CD4-positive, alpha-beta memory T cell (primary cell): ENCODE measurements at regions of chr9 and their contacts with region 1.

Region 1: GRCh38 chr9:128127990-128128835 is 684 bp upstream of the PTGES2 start:
- DNase-seq: peak; percentile 90 to 94 (median 93)
- H3K4me3 ChIP-seq: peak overlapping the region; percentile 86 to 95
- H3K4me3 Mint-ChIP-seq: peak overlapping the region; percentile 96 to 100 (median 99)
- H3K27ac ChIP-seq: peak overlapping the region; percentile 81
- H3K27ac Mint-ChIP-seq: peak overlapping the region; percentile 98 to 100 (median 99)
- H3K4me1 ChIP-seq: peaks cover 37% of the 10 kb centered on the region
- H3K4me1 Mint-ChIP-seq: peaks cover 24 to 46% (median 33%) of the 10 kb centered on the region in 4 donors
- H3K27me3 ChIP-seq: no peaks in the 10 kb centered on the region
- H3K27me3 Mint-ChIP-seq: peaks cover 0 to 2% of the 10 kb centered on the region in 2 donors

Region 2: GRCh38 chr9:128034821-128035764 is 93.1 kb before region 1 on chr9:
- CTCF ChIA-PET with region 1: no interaction called
- POLR2A ChIA-PET with region 1: no interaction called
- intact Hi-C with region 1: no loop called
- DNase-seq: peak; percentile 78 to 82 (median 80)
- H3K4me3 ChIP-seq: no peak overlapping the region
- H3K4me3 Mint-ChIP-seq: peak overlapping the region; percentile 11 to 84 (median 64)
- H3K27ac ChIP-seq: peak overlapping the region; percentile 15
- H3K27ac Mint-ChIP-seq: peak overlapping the region; percentile 87 to 95 (median 92)
- H3K4me1 ChIP-seq: peaks cover 51% of the 10 kb centered on the region
- H3K4me1 Mint-ChIP-seq: peaks cover 19 to 46% (median 32%) of the 10 kb centered on the region in 4 donors
- H3K27me3 ChIP-seq: no peaks in the 10 kb centered on the region
- H3K27me3 Mint-ChIP-seq: no peaks in the 10 kb centered on the region

Region 3: GRCh38 chr9:128117613-128118471 is 10.4 kb before region 1 on chr9:
- CTCF ChIA-PET with region 1: interaction called, 15 read pairs
- POLR2A ChIA-PET with region 1: interaction called, 10 read pairs
- intact Hi-C with region 1: loop called (anchors 1 kb)
- DNase-seq: peak; percentile 88 to 93 (median 91)
- H3K4me3 ChIP-seq: no peak overlapping the region
- H3K4me3 Mint-ChIP-seq: peak overlapping the region in 2 of 8 donors; percentile 48 to 50
- H3K27ac ChIP-seq: no peak overlapping the region
- H3K27ac Mint-ChIP-seq: peak overlapping the region in 6 of 7 donors; percentile 9 to 91 (median 61)
- H3K4me1 ChIP-seq: peaks cover 6% of the 10 kb centered on the region
- H3K4me1 Mint-ChIP-seq: peaks cover 3 to 7% (median 5%) of the 10 kb centered on the region in 4 donors
- H3K27me3 ChIP-seq: no peaks in the 10 kb centered on the region
- H3K27me3 Mint-ChIP-seq: no peaks in the 10 kb centered on the region

Region 4: DNA sequence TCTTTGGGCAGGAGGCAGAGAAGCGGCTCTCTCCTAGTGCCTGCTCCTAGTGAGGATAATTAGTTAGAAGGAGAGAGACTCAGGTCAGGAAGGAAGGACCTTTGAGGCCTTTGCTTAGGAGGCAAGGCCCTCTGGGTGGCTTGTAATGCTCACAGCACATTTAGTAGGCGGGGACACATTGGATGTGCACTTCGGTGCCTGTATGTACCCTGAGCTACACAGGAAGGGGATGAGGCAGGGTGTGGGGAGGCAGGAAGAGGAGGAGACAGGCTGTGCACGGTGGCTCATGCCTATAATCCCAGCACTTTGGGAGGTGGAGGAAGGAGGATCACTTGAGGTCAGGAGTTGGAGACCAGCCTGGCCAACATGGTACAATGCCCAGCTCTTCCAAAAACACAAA is 13.8 kb after region 1 on chr9:
- CTCF ChIA-PET with region 1: interaction called, 6 read pairs
- POLR2A ChIA-PET with region 1: interaction called, 11 read pairs
- intact Hi-C with region 1: no loop called
- DNase-seq: peak in 2 of 5 donors; percentile 26 to 29
- H3K4me3 ChIP-seq: no peak overlapping the region
- H3K4me3 Mint-ChIP-seq: peak overlapping the region in 6 of 8 donors; percentile 18 to 77 (median 36)
- H3K27ac ChIP-seq: no peak overlapping the region
- H3K27ac Mint-ChIP-seq: peak overlapping the region in 4 of 7 donors; percentile 43 to 79 (median 70)
- H3K4me1 ChIP-seq: peaks cover 19% of the 10 kb centered on the region
- H3K4me1 Mint-ChIP-seq: peaks cover 5 to 19% (median 12%) of the 10 kb centered on the region in 4 donors
- H3K27me3 ChIP-seq: no peaks in the 10 kb centered on the region
- H3K27me3 Mint-ChIP-seq: peaks cover 0 to 1% of the 10 kb centered on the region in 2 donors

Region 5: DNA sequence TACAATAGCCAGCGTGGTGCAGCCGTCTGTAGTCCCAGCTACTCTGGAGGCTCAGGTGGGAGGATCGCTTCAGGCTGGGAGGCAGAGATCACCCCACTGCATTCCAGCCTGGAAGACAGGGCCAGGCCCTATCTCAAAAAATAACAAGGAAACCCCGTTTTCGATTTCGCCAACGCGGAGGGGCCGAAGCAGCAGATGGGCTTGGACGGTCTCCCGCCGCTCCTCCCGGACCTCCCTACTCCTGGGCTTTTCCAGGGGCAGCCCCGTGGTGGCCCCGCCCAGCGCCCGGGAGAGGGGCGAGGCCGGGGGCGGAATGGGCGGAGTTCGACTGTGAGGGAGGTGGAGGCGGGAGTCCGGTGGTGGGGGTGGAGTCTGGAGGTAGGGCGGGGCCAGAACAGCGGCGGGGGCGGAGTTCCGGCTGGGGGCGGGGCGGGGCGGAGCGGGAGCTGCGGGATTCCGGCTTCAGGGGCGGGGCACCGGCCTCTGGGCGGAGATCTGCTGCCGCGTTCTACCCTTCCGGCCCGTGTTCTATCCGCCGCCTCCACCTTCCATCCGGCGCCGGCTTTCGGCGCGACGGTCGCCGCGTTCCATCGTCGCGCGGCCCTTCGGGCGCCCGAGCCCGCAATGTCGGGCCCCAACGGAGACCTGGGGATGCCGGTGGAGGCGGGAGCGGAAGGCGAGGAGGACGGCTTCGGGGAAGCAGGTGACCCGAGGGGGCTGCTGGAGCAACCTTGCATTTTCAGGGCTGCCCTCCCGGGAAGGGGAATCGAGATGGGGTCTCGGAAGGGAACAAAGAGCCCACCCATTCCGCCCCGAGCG is 31.8 kb after region 1 on chr9 and contains the start of gene BBLN:
- CTCF ChIA-PET with region 1: interaction called, 9 read pairs
- POLR2A ChIA-PET with region 1: interaction called, 21 read pairs
- intact Hi-C with region 1: loop called (anchors 1 kb)
- DNase-seq: peak; percentile 87 to 91 (median 90)
- H3K4me3 ChIP-seq: peak within 1 kb of the TSS; percentile 89 to 90
- H3K4me3 Mint-ChIP-seq: peak within 1 kb of the TSS; percentile 81 to 90 (median 82)
- H3K27ac ChIP-seq: peak within 1 kb of the TSS; percentile 89
- H3K27ac Mint-ChIP-seq: peak within 1 kb of the TSS; percentile 89 to 97 (median 93)
- H3K4me1 ChIP-seq: peaks cover 16% of the 10 kb centered on the region
- H3K4me1 Mint-ChIP-seq: peaks cover 9 to 27% (median 20%) of the 10 kb centered on the region in 4 donors
- H3K27me3 ChIP-seq: no peaks in the 10 kb centered on the region
- H3K27me3 Mint-ChIP-seq: no peaks in the 10 kb centered on the region
- total RNA-seq, gene BBLN: 47.8 to 50.5 TPM

Region 6: GRCh38 chr9:128191406-128192046 is 63.3 kb after region 1 on chr9 and contains the start of gene CIZ1:
- CTCF ChIA-PET with region 1: interaction called, 4 read pairs
- POLR2A ChIA-PET with region 1: no interaction called
- intact Hi-C with region 1: loop called (anchors 1 kb)
- DNase-seq: peak; percentile 61 to 77 (median 70)
- H3K4me3 ChIP-seq: peak within 1 kb of the TSS; percentile 81 to 82
- H3K4me3 Mint-ChIP-seq: peak within 1 kb of the TSS; percentile 88 to 98 (median 94)
- H3K27ac ChIP-seq: peak within 1 kb of the TSS; percentile 80
- H3K27ac Mint-ChIP-seq: peak within 1 kb of the TSS; percentile 76 to 97 (median 90)
- H3K4me1 ChIP-seq: peaks cover 22% of the 10 kb centered on the region
- H3K4me1 Mint-ChIP-seq: peaks cover 14 to 35% (median 27%) of the 10 kb centered on the region in 4 donors
- H3K27me3 ChIP-seq: no peaks in the 10 kb centered on the region
- H3K27me3 Mint-ChIP-seq: no peaks in the 10 kb centered on the region
- total RNA-seq, gene CIZ1: 156 to 165 TPM

Region 7: DNA sequence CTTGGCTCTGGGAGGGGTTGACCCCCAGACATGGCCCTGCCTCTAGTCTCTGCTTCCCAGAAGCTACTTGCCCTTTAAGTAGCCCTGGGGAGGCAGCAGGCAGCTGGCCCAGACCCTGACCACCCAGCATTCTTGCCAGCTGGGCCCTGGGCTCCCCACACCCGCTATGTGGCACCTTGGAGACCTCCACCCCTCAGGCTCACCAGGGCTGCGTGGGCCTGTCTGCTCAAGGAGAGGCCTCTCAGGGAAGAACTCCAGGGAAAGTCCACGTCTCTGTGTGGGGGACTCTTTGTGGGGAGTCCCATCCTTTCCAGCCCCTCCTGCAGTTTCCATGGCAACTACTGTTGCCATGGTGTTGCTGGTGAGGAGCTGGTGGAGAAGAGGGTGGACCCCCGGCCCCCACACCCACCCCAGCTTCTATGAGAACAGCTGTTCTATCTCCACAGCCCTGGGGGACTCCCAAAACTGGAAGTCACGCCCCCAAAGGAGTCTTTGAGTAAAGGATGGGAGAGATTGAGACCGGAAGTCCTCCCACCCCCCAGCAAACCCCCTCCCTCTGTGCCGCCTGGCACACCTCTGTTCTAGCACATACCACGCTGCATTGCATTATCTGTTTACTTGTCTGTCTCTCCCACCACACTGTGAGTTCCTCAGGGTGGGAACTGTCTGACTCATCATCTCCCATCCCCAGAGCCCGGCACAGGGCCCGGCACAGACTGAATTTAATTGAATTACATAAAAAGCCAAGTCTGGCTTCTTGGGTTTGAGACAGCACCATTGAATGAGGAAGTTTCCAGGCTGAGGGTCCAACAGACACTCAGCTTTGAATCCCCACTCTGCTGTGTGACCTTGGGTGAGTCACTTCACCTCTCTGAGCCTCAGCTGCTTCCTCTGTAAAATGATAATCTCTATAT is 87.5 kb after region 1 on chr9:
- CTCF ChIA-PET with region 1: no interaction called
- POLR2A ChIA-PET with region 1: no interaction called
- intact Hi-C with region 1: no loop called
- DNase-seq: no peak
- H3K4me3 ChIP-seq: no peak overlapping the region
- H3K4me3 Mint-ChIP-seq: no peak overlapping the region
- H3K27ac ChIP-seq: no peak overlapping the region
- H3K27ac Mint-ChIP-seq: no peak overlapping the region
- H3K4me1 ChIP-seq: peaks cover 15% of the 10 kb centered on the region
- H3K4me1 Mint-ChIP-seq: peaks cover 7 to 17% (median 11%) of the 10 kb centered on the region in 4 donors
- H3K27me3 ChIP-seq: no peaks in the 10 kb centered on the region
- H3K27me3 Mint-ChIP-seq: peaks cover 0 to 5% of the 10 kb centered on the region in 2 donors

Region 8: DNA sequence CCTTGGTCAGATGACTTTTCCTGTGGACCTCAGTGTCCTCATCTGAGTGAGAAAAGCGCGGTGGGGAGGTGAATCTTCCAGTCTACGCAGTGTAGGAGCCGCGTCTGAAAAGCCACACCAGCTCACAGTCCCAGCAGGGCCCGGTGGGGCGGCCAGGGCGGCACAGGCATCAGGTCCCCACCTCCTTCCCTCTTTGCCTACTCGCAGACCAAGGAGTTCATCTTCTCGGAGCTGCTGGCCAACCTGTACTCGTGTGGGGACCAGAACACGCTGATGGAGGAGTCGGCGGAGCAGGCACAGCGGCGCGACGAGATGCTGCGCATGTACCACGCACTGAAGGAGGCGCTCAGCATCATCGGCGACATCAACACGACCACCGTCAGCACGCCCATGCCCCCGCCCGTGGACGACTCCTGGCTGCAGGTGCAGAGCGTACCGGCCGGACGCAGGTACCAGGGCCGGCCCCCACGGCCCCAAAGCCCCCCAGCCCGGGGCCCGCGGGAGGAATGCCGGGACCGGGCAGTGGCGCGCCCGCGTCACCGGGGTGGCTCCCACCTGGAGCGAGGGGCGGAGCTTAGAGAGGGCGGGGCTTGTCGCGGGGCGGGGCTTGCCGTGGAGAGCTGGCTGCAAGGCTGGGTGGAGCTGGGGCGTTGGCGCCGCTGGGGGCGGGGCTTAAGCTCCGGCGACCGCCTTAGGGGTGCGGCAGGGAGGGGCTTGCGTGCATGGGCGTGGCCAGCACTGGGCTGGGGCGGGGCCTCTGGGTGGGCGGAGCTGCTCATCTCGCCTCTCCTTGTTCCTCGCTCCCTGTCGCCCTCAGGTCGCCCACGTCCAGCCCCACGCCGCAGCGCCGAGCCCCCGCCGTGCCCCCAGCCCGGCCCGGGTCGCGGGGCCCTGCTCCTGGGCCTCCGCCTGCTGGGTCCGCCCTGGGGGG is 122.0 kb after region 1 on chr9:
- CTCF ChIA-PET with region 1: no interaction called
- POLR2A ChIA-PET with region 1: interaction called, 3 read pairs
- intact Hi-C with region 1: loop called (anchors 1 kb)
- DNase-seq: peak; percentile 95 to 98 (median 96)
- H3K4me3 ChIP-seq: peak overlapping the region in 1 of 2 donors; percentile 75
- H3K4me3 Mint-ChIP-seq: peak overlapping the region; percentile 84 to 93 (median 87)
- H3K27ac ChIP-seq: peak overlapping the region; percentile 56
- H3K27ac Mint-ChIP-seq: peak overlapping the region; percentile 77 to 97 (median 94)
- H3K4me1 ChIP-seq: peaks cover 22% of the 10 kb centered on the region
- H3K4me1 Mint-ChIP-seq: peaks cover 10 to 30% (median 19%) of the 10 kb centered on the region in 4 donors
- H3K27me3 ChIP-seq: no peaks in the 10 kb centered on the region
- H3K27me3 Mint-ChIP-seq: peaks cover 4 to 5% of the 10 kb centered on the region in 2 donors

Region 9: DNA sequence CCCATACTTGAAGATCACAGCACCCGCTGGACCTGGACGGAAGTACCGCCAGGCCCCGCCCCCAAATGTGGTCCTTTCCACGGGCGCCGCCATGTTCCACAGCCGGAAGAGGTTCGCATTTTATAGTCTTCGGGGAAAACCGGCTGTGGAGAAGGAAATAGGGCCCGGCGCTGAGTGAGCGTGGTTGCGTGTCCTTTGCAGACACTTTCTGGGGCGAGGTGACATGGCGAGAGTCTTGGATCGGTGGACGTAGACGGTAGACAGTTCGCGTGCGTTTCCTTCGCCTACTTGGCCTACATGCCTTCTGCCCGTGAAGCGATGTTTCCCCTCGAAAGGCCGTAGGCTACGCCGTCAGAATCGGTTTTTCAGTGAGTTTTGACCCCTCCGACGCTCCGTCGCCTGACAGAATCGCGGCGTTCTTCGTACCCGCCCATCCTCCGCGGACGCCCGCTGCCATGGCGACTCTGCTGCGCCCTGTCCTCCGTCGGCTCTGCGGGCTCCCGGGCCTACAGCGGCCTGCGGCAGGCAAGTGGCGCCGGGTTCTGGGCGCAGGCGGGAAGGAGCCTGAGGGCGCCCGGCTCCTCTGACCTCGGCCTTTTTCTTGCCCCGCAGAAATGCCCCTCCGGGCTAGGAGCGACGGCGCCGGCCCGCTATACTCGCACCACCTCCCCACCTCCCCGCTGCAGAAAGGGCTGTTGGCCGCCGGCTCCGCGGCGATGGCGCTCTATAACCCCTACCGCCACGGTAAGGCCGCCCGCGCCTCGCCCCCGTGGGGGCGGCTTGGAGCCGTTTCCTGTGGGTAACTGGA is 194.4 kb after region 1 on chr9 and contains the starts of genes COQ4 and TRUB2:
- CTCF ChIA-PET with region 1: no interaction called
- POLR2A ChIA-PET with region 1: no interaction called
- intact Hi-C with region 1: loop called (anchors 1 kb)
- DNase-seq: peak; percentile 93 to 96 (median 94)
- H3K4me3 ChIP-seq: peak within 1 kb of the TSS; percentile 78 to 98
- H3K4me3 Mint-ChIP-seq: peak within 1 kb of the TSS; percentile 89 to 99 (median 92)
- H3K27ac ChIP-seq: peak within 1 kb of the TSS; percentile 83
- H3K27ac Mint-ChIP-seq: peak within 1 kb of the TSS; percentile 94 to 99 (median 98)
- H3K4me1 ChIP-seq: peaks cover 32% of the 10 kb centered on the region
- H3K4me1 Mint-ChIP-seq: peaks cover 12 to 39% (median 25%) of the 10 kb centered on the region in 4 donors
- H3K27me3 ChIP-seq: no peaks in the 10 kb centered on the region
- H3K27me3 Mint-ChIP-seq: peaks cover 0 to 2% of the 10 kb centered on the region in 2 donors
- total RNA-seq, gene COQ4: 50.0 to 51.3 TPM
- total RNA-seq, gene TRUB2: 19.6 to 19.8 TPM

Region 10: DNA sequence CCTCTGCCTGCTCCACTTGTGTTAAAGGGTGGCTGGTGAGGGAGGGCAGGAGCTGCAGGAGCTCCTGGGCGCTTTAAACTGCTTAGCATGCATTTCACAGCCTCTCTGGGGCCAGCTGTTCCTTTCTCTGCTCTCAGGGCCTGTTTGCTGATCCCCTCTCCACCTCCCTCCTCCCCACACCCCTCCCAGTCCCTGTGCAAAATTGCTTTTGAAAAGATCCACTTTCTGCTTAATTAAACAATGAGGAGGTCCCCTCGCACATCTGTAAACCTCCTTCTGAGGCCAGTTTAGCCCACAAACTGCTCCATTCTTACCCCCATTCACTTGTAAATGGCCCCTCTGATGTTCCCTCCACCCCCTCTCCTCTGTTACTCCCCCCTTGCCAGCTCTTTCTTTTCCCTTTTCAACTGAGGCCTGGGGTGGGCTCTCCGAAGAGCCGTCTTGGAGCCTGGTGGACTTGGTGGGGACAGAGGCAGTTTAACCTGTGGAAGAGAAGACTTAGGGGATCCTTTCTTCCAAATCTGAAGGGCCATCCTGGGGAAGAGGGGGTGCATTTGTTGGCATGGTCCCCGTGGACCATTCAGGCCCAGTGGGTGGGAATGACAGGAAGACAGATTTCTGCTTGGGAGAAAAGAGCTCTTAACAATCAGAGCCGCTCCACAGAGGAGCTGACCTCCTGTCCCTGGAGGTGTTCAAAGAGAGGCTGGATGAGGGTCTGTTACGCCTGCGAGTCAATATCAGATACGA is 255.0 kb after region 1 on chr9:
- CTCF ChIA-PET with region 1: no interaction called
- POLR2A ChIA-PET with region 1: no interaction called
- intact Hi-C with region 1: no loop called
- DNase-seq: no peak
- H3K4me3 ChIP-seq: no peak overlapping the region
- H3K4me3 Mint-ChIP-seq: no peak overlapping the region
- H3K27ac ChIP-seq: no peak overlapping the region
- H3K27ac Mint-ChIP-seq: peak overlapping the region in 2 of 7 donors; percentile 41 to 47
- H3K4me1 ChIP-seq: no peaks in the 10 kb centered on the region
- H3K4me1 Mint-ChIP-seq: peaks cover 0 to 2% (median under 1%) of the 10 kb centered on the region in 4 donors
- H3K27me3 ChIP-seq: no peaks in the 10 kb centered on the region
- H3K27me3 Mint-ChIP-seq: no peaks in the 10 kb centered on the region

Region 11: DNA sequence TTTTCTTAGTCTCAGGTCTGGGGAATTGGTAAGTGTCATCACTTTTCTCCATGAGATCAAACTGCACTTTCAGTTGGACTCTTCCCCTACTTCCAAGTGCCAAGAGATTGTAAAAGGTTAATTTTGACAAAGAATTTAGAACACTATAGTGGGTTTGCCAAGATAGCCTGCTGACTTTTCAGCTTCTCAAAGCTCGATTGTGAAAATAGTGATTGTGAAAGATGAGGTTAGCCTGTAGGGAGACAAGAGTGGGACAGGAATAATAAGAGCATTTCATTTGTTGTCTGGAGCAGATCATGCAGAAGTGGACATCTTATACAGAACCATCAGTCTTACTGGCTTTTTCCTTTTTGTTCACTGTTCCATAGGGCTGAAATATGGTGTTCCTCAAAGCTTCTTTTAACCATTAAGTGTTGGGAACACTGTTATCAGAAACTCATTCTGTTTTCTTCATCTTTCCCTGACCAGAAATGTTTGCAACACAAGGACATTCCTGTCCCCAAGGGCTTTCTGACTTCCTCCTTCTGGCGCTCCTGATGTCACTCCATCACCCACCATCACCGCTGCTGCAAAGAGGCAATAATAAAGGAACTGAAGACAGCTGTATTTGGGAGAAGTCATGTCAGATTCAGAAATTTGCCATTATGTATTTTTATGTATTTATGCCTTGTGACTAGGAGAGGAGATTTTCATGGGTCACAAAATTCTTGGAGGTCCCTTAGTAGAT is 412.6 kb after region 1 on chr9:
- CTCF ChIA-PET with region 1: no interaction called
- POLR2A ChIA-PET with region 1: no interaction called
- intact Hi-C with region 1: no loop called
- DNase-seq: no peak
- H3K4me3 ChIP-seq: no peak overlapping the region
- H3K4me3 Mint-ChIP-seq: no peak overlapping the region
- H3K27ac ChIP-seq: no peak overlapping the region
- H3K27ac Mint-ChIP-seq: peak overlapping the region in 3 of 7 donors; percentile 53 to 77 (median 68)
- H3K4me1 ChIP-seq: no peaks in the 10 kb centered on the region
- H3K4me1 Mint-ChIP-seq: peaks cover 3 to 5% (median 4%) of the 10 kb centered on the region in 4 donors
- H3K27me3 ChIP-seq: no peaks in the 10 kb centered on the region
- H3K27me3 Mint-ChIP-seq: no peaks in the 10 kb centered on the region